Right ventricle myocardium inferior (tissue), 1 donor: ENCODE measurements at regions of chr7 and their contacts with region 1.

Region 1: DNA sequence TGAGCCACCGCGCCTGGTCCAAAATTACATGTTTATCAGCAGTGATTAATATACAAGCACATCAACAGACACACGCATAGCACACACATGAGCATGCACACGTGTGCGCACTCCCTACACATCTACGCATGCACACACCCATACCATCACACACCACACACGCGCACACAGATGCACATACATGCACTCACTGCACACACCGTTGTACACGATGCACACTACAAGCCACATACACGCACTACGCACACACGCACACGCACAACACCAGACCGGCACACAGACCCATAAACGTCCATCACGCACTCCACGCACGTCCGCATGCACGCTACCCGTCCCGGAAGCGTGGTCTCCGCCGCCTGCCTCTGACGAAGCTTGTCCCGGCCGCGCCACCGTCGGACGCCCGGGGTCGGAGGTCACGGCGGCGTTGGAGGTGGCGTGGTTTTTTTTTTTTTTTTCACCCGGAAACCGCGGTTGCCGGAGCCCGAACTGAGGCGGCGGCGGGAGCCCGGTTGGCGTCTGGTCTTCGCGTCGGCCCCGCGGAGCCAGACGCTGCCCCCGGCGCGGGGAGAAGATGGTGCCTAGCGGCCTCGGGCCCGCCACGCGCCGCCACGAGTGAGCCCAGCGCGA is at the start of gene TMEM248:
- DNase-seq: peak; percentile 95
- ATAC-seq: peak; percentile 97
- total RNA-seq, gene TMEM248: 45.9 TPM

Region 2: DNA sequence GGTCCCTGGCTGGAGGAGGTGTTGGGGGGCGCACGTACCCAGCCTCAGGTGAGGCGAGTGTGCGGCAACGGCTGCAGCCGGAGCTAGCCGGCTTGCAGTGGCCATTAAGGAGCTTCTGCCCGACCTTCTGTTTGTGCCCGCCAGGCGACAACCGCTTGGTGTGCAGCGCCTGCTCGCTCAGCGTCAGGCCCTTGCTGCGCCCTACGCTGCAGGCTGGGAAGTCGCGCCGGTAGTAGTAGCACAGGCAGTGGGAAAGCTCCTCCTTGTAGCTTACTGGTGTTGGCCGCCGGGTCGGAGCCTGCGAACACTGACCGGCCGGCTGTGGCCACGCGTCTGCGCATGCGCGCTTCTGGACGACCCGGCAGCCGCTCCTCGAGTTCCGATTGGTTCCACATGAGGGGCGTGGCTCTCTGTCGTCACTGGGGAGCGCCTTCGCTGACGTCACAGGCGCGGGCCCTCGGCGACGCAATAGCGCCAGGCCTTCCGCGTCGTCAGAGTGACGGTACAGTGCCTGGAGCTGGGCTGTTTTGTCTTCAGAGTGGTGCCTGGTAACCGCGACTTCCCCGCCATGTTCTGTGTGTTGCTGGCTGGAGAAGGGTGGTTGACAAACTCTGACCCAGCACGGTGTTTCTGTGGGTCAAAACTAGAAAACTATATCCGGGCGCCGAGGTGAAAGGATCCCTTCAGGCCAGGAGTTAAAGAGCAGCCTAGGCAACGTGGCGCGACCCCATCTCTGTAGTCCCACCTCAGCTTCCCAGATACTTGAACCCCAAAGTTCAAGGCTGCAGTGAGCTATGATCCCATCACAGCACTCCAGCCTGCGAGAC is 76.1 kb before region 1 on chr7:
- intact Hi-C with region 1: loop called (anchors 10 kb)
- DNase-seq: peak; percentile 98
- ATAC-seq: peak; percentile 98

Region 3: DNA sequence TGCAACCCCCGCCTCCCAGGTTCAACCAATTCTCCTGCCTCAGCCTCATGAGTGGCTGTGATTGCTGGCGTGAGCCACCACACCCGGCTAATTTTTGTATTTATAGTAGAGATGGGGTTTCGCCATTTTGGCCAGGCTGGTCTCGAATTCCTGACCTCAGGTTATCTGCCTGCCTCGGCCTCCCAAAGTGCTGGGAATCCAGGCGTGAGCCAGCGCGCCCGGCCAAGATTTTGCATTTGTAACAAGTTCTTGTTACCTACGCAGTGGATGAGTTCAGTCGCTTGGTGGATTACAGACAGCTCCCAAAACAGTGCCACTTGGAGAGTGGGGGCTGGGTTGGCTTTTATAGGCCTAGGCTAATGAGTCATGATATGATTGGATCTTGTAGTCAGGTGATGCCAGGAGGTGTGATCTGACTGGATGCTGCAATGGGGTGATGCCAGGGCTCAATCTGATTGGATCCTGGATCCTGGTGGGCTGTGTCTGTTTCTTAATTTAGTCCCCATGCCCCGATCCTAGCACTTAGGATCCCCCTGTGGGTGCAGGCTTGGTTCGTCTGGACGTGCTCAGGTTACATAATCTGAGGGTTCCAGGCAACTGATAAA is 54.2 kb after region 1 on chr7:
- intact Hi-C with region 1: no loop called
- DNase-seq: no peak
- ATAC-seq: no peak